ENCODE measurements at regions of chr17 and their contacts with region 1.

Region 1: DNA sequence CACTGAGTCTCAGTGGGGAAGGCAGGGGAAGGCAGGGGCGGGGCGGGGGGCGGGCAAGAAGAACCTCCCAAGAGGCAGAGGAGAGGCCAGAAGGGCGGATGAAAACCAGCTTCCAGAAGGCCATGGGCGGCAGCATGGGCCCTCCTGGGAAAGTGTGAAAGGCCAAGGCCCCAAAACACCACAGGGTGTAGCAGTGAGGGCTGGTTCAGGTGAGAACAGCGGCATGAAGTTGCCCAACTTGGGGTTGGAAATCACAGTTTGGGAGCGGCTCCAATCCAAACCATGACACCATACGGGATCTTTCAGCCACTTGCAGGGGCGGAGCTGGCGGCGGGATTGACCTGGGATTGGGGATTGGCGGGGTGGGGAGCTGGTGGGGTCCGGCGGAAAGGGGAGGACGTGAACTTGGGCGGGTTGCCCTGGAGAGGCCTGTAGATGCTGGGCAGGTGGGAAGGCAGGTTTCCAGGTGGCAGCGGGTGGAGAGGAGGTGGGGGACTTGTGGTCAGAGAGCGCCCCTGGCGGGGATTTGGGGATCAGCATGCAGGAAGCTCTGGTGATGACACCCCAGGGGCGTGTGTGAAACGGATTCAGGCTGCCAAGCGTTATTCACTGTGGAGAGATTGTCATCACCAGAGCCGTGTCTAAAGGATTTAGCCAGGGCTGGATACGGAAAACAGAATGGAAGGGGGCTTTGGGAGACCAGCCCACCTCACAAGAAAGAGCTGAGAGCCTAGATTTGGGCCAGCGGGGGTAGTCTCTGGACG is 80.9 kb downstream of the ARHGAP23 start:
- DNase-seq: peak; percentile 97
- ATAC-seq: peak; percentile 69
- H3K4me3 Mint-ChIP-seq: peak overlapping the region; percentile 79
- H3K27ac Mint-ChIP-seq: no peak overlapping the region
- H3K4me1 Mint-ChIP-seq: peaks cover 33% of the 10 kb centered on the region
- H3K27me3 Mint-ChIP-seq: peaks cover 33% of the 10 kb centered on the region
- CTCF ChIP-seq: peak; percentile 93

Region 2: GRCh38 chr17:38351412-38352222 is 157.6 kb before region 1 on chr17 and contains the start of gene SOCS7:
- CTCF ChIA-PET with region 1: interaction called, 14 read pairs
- POLR2A ChIA-PET with region 1: no interaction called
- DNase-seq: peak; percentile 90
- ATAC-seq: peak; percentile 81
- H3K4me3 Mint-ChIP-seq: peak within 1 kb of the TSS; percentile 79
- H3K27ac Mint-ChIP-seq: peak within 1 kb of the TSS; percentile 98
- H3K4me1 Mint-ChIP-seq: peaks cover 48% of the 10 kb centered on the region
- H3K27me3 Mint-ChIP-seq: no peaks in the 10 kb centered on the region; the same call in 1 of the 2 replicates
- CTCF ChIP-seq: no peak
- total RNA-seq, gene SOCS7: 32.3 to 34.4 TPM (median 33.6 TPM) in 3 replicates

Region 3: GRCh38 chr17:38454516-38454915 is 54.7 kb before region 1 on chr17:
- CTCF ChIA-PET with region 1: interaction called, 31 read pairs
- POLR2A ChIA-PET with region 1: interaction called, 23 read pairs
- DNase-seq: no peak
- ATAC-seq: no peak
- H3K4me3 Mint-ChIP-seq: peak overlapping the region; percentile 62
- H3K27ac Mint-ChIP-seq: peak overlapping the region; percentile 84
- H3K4me1 Mint-ChIP-seq: peaks cover 65% of the 10 kb centered on the region
- H3K27me3 Mint-ChIP-seq: 0 out of 2 replicates have a peak, but pooled peaks cover 2% of the 10 kb centered on the region
- CTCF ChIP-seq: no peak

Region 4: DNA sequence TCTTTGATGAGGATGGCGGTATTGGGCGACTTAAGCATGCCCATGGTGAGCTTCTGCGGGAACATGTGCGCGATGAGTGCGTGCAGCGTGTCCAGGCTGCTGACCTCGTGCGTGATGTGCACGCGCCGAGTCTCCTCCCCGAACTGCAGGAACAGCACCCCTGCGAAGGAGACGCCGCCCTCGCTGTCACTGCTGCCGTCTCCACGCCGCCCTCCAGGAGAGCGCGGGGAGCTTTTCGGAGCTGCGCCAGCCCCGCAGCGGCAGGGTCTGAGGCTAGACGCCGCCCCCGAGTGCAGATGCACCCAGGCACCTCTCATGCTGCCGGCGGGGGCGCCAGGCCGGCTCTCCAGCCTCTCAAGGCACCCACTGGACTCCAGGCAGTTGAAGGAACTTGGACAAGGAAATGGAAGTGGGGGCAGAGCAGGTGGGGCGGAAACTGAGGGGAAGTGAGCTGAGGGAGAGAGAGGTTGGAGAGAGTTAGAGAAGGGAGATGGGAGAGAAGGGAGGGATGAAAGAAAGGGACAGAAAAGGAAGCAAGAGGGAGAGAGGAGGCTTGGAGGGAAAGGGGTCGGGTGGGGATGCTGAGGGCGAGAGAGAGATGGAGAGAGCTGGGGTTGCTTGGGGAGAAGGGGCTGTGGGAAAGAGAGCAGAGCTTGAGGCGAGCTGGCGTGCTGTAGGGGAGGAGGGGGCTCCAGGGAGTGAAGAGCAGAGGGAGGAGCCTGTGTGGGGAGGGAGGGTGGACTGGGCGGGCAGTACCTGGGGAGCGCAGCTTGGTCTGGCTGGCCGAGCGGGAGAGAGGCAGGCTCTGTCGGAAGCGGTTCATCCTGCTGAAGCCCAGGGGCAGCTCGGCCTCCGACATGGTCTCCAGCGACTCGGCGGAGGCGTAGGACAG is 54.4 kb after region 1 on chr17:
- CTCF ChIA-PET with region 1: interaction called, 61 read pairs
- POLR2A ChIA-PET with region 1: interaction called, 10 read pairs
- DNase-seq: peak; percentile 79
- ATAC-seq: peak; percentile 45
- H3K4me3 Mint-ChIP-seq: peak overlapping the region; percentile 71
- H3K27ac Mint-ChIP-seq: no peak overlapping the region
- H3K4me1 Mint-ChIP-seq: peaks cover 58% of the 10 kb centered on the region
- H3K27me3 Mint-ChIP-seq: peaks cover 95% of the 10 kb centered on the region
- CTCF ChIP-seq: no peak

Region 5: DNA sequence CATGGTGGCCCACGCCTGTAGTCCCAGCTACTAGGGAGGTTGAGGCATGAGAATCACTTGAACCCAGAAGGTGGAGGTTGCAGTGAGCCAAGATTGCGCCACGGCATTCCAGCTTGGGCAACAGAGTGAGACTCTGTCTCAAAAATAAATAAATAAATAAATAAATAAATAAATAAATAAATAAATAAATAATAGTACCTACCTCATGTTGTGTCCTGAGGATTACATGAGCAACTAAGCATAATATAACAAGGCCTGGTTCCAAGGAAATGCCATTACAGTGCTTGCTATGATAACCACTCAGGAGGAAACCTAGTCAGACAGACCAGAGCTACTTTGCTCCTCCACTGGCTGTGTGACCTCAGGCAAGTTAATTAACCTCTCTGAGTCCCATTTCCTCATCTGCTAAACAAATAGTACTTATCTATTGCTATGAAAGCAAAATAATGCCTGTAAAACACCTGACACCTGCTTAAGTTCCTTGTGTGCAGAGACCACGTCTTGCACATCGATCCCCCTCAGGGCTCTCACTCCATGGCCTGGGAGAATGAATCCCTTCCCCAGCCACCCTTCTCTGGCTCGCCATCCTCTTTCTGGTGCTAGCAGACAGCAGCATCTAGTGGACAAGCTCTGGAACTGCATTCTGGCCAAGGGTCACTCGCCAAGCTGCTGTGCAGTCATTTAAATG is 158.1 kb after region 1 on chr17:
- CTCF ChIA-PET with region 1: interaction called, 74 read pairs
- POLR2A ChIA-PET with region 1: no interaction called
- DNase-seq: peak; percentile 82
- ATAC-seq: peak; percentile 12; the same call in 1 of the 2 replicates
- H3K4me3 Mint-ChIP-seq: no peak overlapping the region
- H3K27ac Mint-ChIP-seq: no peak overlapping the region
- H3K4me1 Mint-ChIP-seq: peaks cover 52% of the 10 kb centered on the region
- H3K27me3 Mint-ChIP-seq: peaks cover 60% of the 10 kb centered on the region
- CTCF ChIP-seq: peak; percentile 96